ENCODE measurements at regions of chr12 and their contacts with region 1.

Region 1: DNA sequence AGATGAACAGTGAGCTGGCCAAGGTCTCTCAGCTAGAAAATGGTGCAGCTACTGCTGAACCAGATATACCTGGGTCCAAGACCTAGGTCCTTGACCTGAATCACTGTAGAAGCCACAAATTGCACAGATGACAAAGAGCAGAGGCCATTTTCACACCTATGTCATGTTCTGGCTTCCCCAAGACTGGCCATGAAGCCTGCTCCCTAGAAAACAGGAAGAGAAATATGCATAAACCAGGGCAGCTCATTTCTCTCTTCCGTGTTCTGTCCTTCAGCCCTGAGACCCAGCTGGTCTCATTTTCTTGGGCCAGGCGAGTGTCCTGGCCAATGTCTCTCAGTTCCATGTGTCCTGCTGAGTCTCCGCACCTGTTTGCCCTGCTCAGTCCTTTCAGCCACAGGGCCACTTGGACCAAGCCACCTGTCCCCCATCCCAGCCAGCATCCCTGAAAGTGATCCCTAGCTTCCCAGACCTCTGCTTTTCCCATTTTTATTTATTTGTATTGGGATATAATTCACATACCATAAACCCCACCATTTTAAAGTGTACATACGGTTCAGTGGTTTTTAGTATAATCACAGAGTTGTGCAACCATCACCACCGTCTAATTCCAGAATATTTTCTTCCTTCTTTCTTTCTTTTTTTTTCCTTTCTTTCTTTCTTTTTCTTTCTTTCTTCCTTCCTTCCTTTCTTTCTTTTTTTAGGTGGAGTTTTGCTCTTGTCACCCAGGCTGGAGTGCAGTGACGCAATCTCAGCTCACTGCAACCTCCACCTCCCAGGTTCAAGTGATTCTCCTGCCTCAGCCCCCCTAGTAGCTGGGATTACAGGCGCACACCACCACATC is 27.0 kb downstream of the P2RX7 start:
- H3K4me3 Mint-ChIP-seq: no peak overlapping the region
- H3K27ac Mint-ChIP-seq: peak overlapping the region; percentile 78
- H3K4me1 Mint-ChIP-seq: peaks cover 23% of the 10 kb centered on the region
- H3K27me3 Mint-ChIP-seq: no peaks in the 10 kb centered on the region

Region 2: GRCh38 chr12:120866108-120866507 is 293.6 kb before region 1 on chr12:
- intact Hi-C with region 1: no loop called
- H3K4me3 Mint-ChIP-seq: no peak overlapping the region
- H3K27ac Mint-ChIP-seq: no peak overlapping the region
- H3K4me1 Mint-ChIP-seq: peaks cover 34% of the 10 kb centered on the region
- H3K27me3 Mint-ChIP-seq: no peaks in the 10 kb centered on the region

Region 3: DNA sequence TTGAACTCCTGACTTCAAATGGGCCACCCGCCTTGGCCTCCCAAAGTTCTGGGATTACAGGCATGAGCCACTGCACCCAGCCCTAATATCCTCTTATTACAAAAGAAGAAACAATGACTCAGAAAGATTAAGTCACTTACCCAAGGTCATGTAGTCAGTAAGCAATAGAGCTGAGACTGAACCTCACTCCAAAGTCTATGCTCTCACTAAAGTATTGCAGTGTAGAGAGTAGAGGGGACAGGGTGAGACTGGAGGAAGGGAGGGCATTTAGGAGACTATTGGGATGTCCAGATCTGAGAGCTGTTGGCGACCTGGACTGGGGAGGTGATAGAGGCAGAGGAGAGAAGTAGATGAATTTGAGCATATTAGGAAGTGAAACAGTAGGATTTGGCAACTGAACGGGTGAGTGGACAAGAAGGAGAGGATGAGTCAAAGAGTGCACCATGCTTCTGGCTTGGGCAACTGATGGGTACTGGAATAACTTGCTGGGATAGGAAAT is 15.2 kb before region 1 on chr12:
- intact Hi-C with region 1: loop called (anchors 2 kb)
- H3K4me3 Mint-ChIP-seq: peak overlapping the region; percentile 11
- H3K27ac Mint-ChIP-seq: peak overlapping the region; percentile 89
- H3K4me1 Mint-ChIP-seq: peaks cover 62% of the 10 kb centered on the region
- H3K27me3 Mint-ChIP-seq: no peaks in the 10 kb centered on the region

Measured in dendritic cell treated with granulocyte-macrophage colony-stimulating factor and Interleukin-4, amounts not matched to agents 40 ng/mL and 50 ng/mL, for 4 days (primary cell).